ENCODE measurements at regions of chr1 and their contacts with region 1.

Region 1: GRCh38 chr1:161225534-161226319 is at the start of gene TOMM40L:
- DNase-seq: peak; percentile 94
- H3K4me3 ChIP-seq: peak within 1 kb of the TSS; percentile 42 to 93 (median 68)
- H3K27ac ChIP-seq: peak within 1 kb of the TSS; percentile 50 to 85 (median 71)
- H3K4me1 ChIP-seq: peaks cover 22 to 42% (median 30%) of the 10 kb centered on the region in 6 donors
- H3K27me3 ChIP-seq: peaks cover 0 to 20% (median 0%) of the 10 kb centered on the region in 7 donors
- CTCF ChIP-seq: peak; percentile 22 to 75 (median 64)
- POLR2A ChIP-seq: no peak
- total RNA-seq, gene TOMM40L: 8.3 to 15.3 (median 10.7) TPM

Region 2: GRCh38 chr1:161298116-161298515 is 72.4 kb after region 1 on chr1:
- intact Hi-C with region 1: loop called (anchors 5 kb)
- DNase-seq: no peak
- H3K4me3 ChIP-seq: no peak overlapping the region
- H3K27ac ChIP-seq: peak overlapping the region in 2 of 8 donors; percentile 33 to 41
- H3K4me1 ChIP-seq: peaks cover 0 to 32% (median 15%) of the 10 kb centered on the region in 6 donors
- H3K27me3 ChIP-seq: no peaks in the 10 kb centered on the region
- CTCF ChIP-seq: no peak
- POLR2A ChIP-seq: no peak

Region 3: DNA sequence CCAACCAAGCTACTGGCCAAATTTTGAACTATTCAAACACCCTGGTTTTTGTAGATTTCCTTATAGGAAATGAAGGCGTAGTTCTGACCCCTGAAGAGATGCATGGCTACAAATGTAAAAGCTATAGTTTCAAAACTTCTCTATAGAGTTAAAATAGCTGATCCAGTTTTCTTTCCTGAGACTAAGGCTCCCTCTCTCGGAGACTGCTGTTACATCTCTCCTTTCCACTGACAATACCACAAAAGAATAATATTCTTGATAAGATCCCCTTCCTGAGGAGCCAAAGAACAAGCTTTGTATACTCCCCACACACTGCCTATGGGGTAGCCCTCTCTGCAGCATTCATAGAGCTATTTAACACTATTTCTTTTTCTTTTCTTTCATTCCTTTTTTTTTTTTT is 148.6 kb after region 1 on chr1:
- intact Hi-C with region 1: loop called (anchors 5 kb)
- DNase-seq: no peak
- H3K4me3 ChIP-seq: no peak overlapping the region
- H3K27ac ChIP-seq: no peak overlapping the region
- H3K4me1 ChIP-seq: no peaks in the 10 kb centered on the region
- H3K27me3 ChIP-seq: no peaks in the 10 kb centered on the region
- CTCF ChIP-seq: peak in 1 of 11 experiments; percentile 17
- POLR2A ChIP-seq: no peak

Measured in spleen (tissue), 13 donors.